Common myeloid progenitor, CD34-positive (primary cell): ENCODE measurements at regions of chrX and their contacts with region 1.

Region 1: GRCh38 chrX:153719238-153719637 is 4.9 kb downstream of the BCAP31 start:
- DNase-seq: no peak
- H3K4me3 ChIP-seq: no peak overlapping the region
- H3K27ac ChIP-seq: no peak overlapping the region
- H3K4me1 ChIP-seq: peaks cover 3 to 17% (median 11%) of the 10 kb centered on the region in 4 experiments
- H3K27me3 ChIP-seq: peaks cover 0 to 18% (median 0%) of the 10 kb centered on the region in 5 experiments

Region 2: GRCh38 chrX:153708415-153708814 is 10.8 kb before region 1 on chrX:
- CTCF ChIA-PET with region 1: interaction called, 14 read pairs
- POLR2A ChIA-PET with region 1: interaction called, 3 read pairs
- DNase-seq: peak; percentile 63 to 83 (median 80)
- H3K4me3 ChIP-seq: no peak overlapping the region
- H3K27ac ChIP-seq: no peak overlapping the region
- H3K4me1 ChIP-seq: peaks cover 0 to 4% (median 2%) of the 10 kb centered on the region in 4 experiments
- H3K27me3 ChIP-seq: peaks cover 0 to 26% (median 0%) of the 10 kb centered on the region in 5 experiments

Region 3: GRCh38 chrX:153735274-153735673 is 16.0 kb after region 1 on chrX:
- CTCF ChIA-PET with region 1: no interaction called
- POLR2A ChIA-PET with region 1: no interaction called
- DNase-seq: peak in 2 of 3 donors; percentile 15 to 18
- H3K4me3 ChIP-seq: no peak overlapping the region
- H3K27ac ChIP-seq: no peak overlapping the region
- H3K4me1 ChIP-seq: peaks cover 0 to 3% (median 0%) of the 10 kb centered on the region in 4 experiments
- H3K27me3 ChIP-seq: no peaks in the 10 kb centered on the region